GM12878 (cell line): ENCODE measurements at regions of chr1 and their contacts with region 1.

Region 1: DNA sequence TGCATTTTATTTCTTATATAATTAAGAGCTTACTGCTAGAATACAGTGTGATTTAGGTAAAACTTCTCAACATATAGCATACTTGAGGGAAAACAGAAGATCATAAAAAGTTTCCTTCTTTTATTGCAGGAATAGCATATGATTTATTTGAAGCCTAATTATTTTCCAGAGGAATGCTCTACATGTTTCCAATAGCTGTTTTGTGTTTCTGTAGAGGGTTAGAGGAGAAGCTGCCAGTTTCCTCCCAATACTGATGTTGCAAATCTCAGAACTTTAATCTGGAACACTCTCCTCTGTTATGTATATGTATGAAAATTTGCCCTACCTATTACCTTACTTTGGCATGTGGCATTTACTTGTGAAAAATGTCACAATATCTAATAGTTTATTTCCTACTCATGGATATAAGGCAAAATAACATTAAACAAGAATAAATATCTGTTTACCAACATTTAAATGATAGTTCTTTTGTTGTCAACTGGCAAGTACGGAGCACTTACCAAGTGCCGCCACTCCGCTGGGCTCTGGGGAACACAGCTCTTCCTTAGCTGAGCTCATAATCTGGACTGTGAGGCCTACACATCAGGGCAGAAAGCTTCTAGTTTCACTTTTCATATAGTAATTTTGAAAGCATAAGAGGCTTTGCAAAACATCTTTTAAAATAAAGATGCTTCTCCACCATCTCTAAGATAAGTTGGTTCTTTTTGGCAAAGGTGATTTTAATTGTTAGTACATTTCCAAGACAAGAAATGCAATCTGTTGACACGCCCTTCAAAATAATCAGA is 239.8 kb upstream of the C1orf105 start:
- DNase-seq: peak; percentile 69
- ATAC-seq: peak; percentile 88
- H3K4me3 ChIP-seq: peak overlapping the region; percentile 58
- H3K27ac ChIP-seq: peak overlapping the region; percentile 86
- H3K4me1 ChIP-seq: peaks cover 29% of the 10 kb centered on the region
- H3K27me3 ChIP-seq: no peaks in the 10 kb centered on the region
- CTCF ChIP-seq: no peak
- EP300 ChIP-seq: peak in 1 of 2 experiments; percentile 36; a peak in 1 of 4 replicates
- POLR2A ChIP-seq: 0 out of 2 replicates have a peak, but pooled peaks have one; percentile 22
- RAD21 ChIP-seq: peak; percentile 26; the same call in 1 of the 2 replicates

Region 2: DNA sequence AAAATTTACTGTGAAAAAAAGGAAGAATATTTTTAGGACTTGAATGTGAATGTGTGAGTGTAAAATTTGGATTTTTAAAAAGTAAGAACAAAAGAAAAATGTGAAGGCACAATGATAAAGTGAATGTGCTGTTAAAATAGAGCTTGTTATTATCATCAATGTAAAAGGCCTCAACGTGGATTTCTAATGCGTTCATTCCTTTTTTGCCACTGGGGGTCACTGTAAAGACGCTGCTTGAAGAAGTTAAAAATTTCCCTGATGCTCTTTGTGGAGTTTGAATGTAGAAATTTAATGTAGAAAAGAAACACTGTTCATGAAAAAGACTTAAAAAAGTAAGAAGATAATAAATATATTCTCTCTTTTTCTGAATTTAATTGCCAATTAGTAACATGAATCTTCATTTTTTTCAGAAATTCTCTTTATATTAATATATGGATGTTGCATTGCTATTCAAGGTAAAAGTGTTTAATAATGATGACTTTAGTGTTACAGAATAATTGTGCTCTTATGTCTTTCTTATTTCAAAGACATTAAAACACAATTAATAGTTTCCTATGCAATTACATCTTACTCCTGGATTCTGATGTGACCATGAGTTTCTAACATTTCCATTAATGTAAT is 177.9 kb before region 1 on chr1:
- CTCF ChIA-PET with region 1: interaction called, 6 read pairs
- POLR2A ChIA-PET with region 1: no interaction called
- RAD21 ChIA-PET with region 1: no interaction called
- SMC1A ChIA-PET with region 1: interaction called, 5 read pairs
- in situ Hi-C with region 1: no loop called
- intact Hi-C with region 1: loop called (anchors 5 kb)
- DNase-seq: peak; percentile 28
- ATAC-seq: peak; percentile 72
- H3K4me3 ChIP-seq: no peak overlapping the region
- H3K27ac ChIP-seq: no peak overlapping the region
- H3K4me1 ChIP-seq: no peaks in the 10 kb centered on the region
- H3K27me3 ChIP-seq: no peaks in the 10 kb centered on the region; a peak in 1 of 4 replicates
- CTCF ChIP-seq: peak; percentile 56 to 85 (median 65)
- EP300 ChIP-seq: no peak
- POLR2A ChIP-seq: no peak
- RAD21 ChIP-seq: peak; percentile 97

Region 3: GRCh38 chr1:172154551-172154950 is 26.1 kb before region 1 on chr1:
- CTCF ChIA-PET with region 1: interaction called, 7 read pairs
- POLR2A ChIA-PET with region 1: no interaction called
- RAD21 ChIA-PET with region 1: interaction called, 10 read pairs
- SMC1A ChIA-PET with region 1: interaction called, 10 read pairs
- in situ Hi-C with region 1: no loop called
- intact Hi-C with region 1: no loop called
- DNase-seq: peak; percentile 23
- ATAC-seq: peak; percentile 97
- H3K4me3 ChIP-seq: no peak overlapping the region
- H3K27ac ChIP-seq: peak overlapping the region; percentile 10; the same call in 1 of the 2 replicates
- H3K4me1 ChIP-seq: no peaks in the 10 kb centered on the region
- H3K27me3 ChIP-seq: no peaks in the 10 kb centered on the region
- CTCF ChIP-seq: no peak
- EP300 ChIP-seq: no peak
- POLR2A ChIP-seq: no peak
- RAD21 ChIP-seq: no peak

Region 4: DNA sequence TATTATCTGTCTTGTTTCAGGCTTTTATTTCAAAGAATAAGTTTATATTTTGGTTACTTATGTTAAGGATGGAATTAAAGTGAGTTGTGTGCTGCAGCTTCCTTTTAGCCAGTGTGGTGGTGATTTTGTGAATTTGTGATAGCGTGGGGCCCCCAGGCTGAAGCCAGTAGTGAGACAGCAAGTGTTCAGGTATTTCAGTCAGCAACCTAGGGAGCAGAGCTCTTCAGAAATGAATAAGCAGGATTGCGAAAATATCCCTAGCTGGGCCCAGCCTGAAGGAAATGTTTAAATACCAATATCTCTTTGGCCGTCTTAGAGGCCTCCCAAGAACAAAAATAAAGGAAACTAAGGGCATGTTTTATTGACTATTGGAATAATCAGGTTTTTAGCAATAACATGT is 89.0 kb after region 1 on chr1:
- CTCF ChIA-PET with region 1: interaction called, 3 read pairs
- POLR2A ChIA-PET with region 1: no interaction called
- RAD21 ChIA-PET with region 1: interaction called, 7 read pairs
- SMC1A ChIA-PET with region 1: interaction called, 4 read pairs
- in situ Hi-C with region 1: no loop called
- intact Hi-C with region 1: loop called (anchors 5 kb)
- DNase-seq: no peak
- ATAC-seq: no peak
- H3K4me3 ChIP-seq: no peak overlapping the region
- H3K27ac ChIP-seq: no peak overlapping the region
- H3K4me1 ChIP-seq: peaks cover 19% of the 10 kb centered on the region
- H3K27me3 ChIP-seq: no peaks in the 10 kb centered on the region
- CTCF ChIP-seq: no peak
- EP300 ChIP-seq: no peak
- POLR2A ChIP-seq: no peak
- RAD21 ChIP-seq: no peak

Region 5: GRCh38 chr1:172351761-172352161 is 171.1 kb after region 1 on chr1:
- CTCF ChIA-PET with region 1: no interaction called
- POLR2A ChIA-PET with region 1: interaction called, 5 read pairs
- RAD21 ChIA-PET with region 1: interaction called, 6 read pairs
- SMC1A ChIA-PET with region 1: interaction called, 10 read pairs
- in situ Hi-C with region 1: no loop called
- intact Hi-C with region 1: loop called (anchors 5 kb)
- DNase-seq: no peak
- ATAC-seq: no peak
- H3K4me3 ChIP-seq: no peak overlapping the region
- H3K27ac ChIP-seq: no peak overlapping the region
- H3K4me1 ChIP-seq: peaks cover 4% of the 10 kb centered on the region
- H3K27me3 ChIP-seq: no peaks in the 10 kb centered on the region
- CTCF ChIP-seq: no peak
- EP300 ChIP-seq: no peak
- POLR2A ChIP-seq: no peak
- RAD21 ChIP-seq: no peak

Region 6: GRCh38 chr1:172390683-172391551 is 210.2 kb after region 1 on chr1:
- CTCF ChIA-PET with region 1: interaction called, 10 read pairs
- POLR2A ChIA-PET with region 1: interaction called, 8 read pairs
- RAD21 ChIA-PET with region 1: interaction called, 180 read pairs
- SMC1A ChIA-PET with region 1: interaction called, 39 read pairs
- in situ Hi-C with region 1: loop called (anchors 5 kb)
- intact Hi-C with region 1: loop called (anchors 1 kb)
- DNase-seq: peak; percentile 96
- ATAC-seq: peak; percentile 82
- H3K4me3 ChIP-seq: peak overlapping the region; percentile 11; the same call in 1 of the 2 replicates
- H3K27ac ChIP-seq: peak overlapping the region; percentile 98
- H3K4me1 ChIP-seq: peaks cover 56% of the 10 kb centered on the region
- H3K27me3 ChIP-seq: no peaks in the 10 kb centered on the region
- CTCF ChIP-seq: no peak
- EP300 ChIP-seq: no peak
- POLR2A ChIP-seq: peak; percentile 32; the same call in 1 of the 2 replicates
- RAD21 ChIP-seq: peak; percentile 34; the same call in 1 of the 2 replicates